HCT116 (cell line): ENCODE measurements at regions of chr3 and their contacts with region 1.

Region 1: DNA sequence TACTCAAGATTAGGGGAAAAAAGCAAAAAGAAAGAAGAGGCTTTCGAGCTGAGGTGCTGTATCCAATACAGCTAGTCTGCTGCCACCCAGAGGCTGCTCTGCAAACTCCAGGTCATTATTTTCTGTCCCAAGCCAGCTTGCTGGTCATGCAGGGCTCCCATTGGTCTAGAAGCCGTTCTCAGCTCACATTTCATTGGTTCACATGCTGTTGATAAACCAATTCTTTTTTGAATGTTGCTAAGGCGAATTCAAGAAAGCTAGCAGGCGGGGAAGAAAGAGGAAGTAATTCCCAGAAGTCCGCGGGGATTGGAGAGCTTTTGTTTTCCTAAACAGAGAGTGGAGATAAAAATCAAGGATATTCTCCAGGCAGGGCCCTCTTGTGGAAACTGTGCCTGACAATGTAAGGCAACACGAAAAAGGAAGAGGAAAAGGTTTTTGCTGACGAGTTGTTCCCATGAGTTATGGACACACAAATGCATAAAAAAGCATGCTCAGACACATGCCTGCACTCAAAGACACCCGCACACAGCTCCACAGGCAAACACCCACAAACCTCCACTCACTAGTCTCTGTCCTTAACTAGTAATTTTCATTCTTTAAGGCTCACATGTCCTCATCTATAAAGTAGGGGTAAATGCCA is 33.4 kb downstream of the FSTL1 start:
- DNase-seq: peak; percentile 96
- ATAC-seq: peak; percentile 91
- H3K4me3 ChIP-seq: peak overlapping the region; percentile 24 to 39
- H3K27ac ChIP-seq: peak overlapping the region; percentile 50
- H3K4me1 ChIP-seq: peaks cover 9 to 23% of the 10 kb centered on the region in 2 experiments
- H3K27me3 ChIP-seq: no peaks in the 10 kb centered on the region
- CTCF ChIP-seq: peak; percentile 78 to 95 (median 88)
- POLR2A ChIP-seq: no peak
- RAD21 ChIP-seq: peak; percentile 97

Region 2: DNA sequence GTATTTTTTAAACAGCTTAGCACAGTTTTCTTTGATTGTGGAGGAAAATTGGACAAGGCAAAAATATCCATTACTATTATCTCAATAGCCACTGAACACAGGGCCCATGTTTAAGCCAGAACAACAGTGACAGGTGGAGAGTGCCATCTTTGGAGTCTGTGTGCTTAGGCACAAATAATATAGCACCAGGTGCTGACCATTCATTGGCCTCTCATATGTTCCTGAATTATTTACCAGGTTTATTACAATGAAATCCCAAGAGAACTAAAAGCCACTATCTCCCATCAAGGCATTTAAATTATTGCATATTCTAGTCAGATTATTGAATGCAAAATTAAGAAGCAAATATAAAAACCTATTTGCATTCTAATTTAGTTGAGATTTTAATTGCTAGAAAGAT is 172.0 kb before region 1 on chr3:
- CTCF ChIA-PET with region 1: interaction called, 115 read pairs
- POLR2A ChIA-PET with region 1: interaction called, 3 read pairs
- RAD21 ChIA-PET with region 1: interaction called, 14 to 16 read pairs
- intact Hi-C with region 1: loop called (anchors 1 kb)
- DNase-seq: no peak
- ATAC-seq: no peak
- H3K4me3 ChIP-seq: no peak overlapping the region
- H3K27ac ChIP-seq: no peak overlapping the region
- H3K4me1 ChIP-seq: no peaks in the 10 kb centered on the region
- H3K27me3 ChIP-seq: no peaks in the 10 kb centered on the region
- CTCF ChIP-seq: no peak
- POLR2A ChIP-seq: no peak
- RAD21 ChIP-seq: no peak

Region 3: GRCh38 chr3:120435621-120436020 is 18.2 kb after region 1 on chr3:
- CTCF ChIA-PET with region 1: interaction called, 17 read pairs
- POLR2A ChIA-PET with region 1: no interaction called
- RAD21 ChIA-PET with region 1: no interaction called
- intact Hi-C with region 1: no loop called
- DNase-seq: peak; percentile 50
- ATAC-seq: peak; percentile 80
- H3K4me3 ChIP-seq: peak overlapping the region in 1 of 2 experiments; percentile 5; a peak in 1 of 4 replicates
- H3K27ac ChIP-seq: peak overlapping the region; percentile 30; the same call in 1 of the 2 replicates
- H3K4me1 ChIP-seq: peaks cover 2 to 26% of the 10 kb centered on the region in 2 experiments; a peak in 3 of 4 replicates
- H3K27me3 ChIP-seq: no peaks in the 10 kb centered on the region
- CTCF ChIP-seq: no peak
- POLR2A ChIP-seq: no peak
- RAD21 ChIP-seq: 0 out of 2 replicates have a peak, but pooled peaks have one; percentile 20

Region 4: GRCh38 chr3:120506828-120507774 is 89.7 kb after region 1 on chr3:
- CTCF ChIA-PET with region 1: interaction called, 3 read pairs
- POLR2A ChIA-PET with region 1: no interaction called
- RAD21 ChIA-PET with region 1: interaction called in 1 of 2 experiments, 3 read pairs
- intact Hi-C with region 1: loop called (anchors 1 kb)
- DNase-seq: peak; percentile 13
- ATAC-seq: peak; percentile 73
- H3K4me3 ChIP-seq: no peak overlapping the region
- H3K27ac ChIP-seq: no peak overlapping the region
- H3K4me1 ChIP-seq: no peaks in the 10 kb centered on the region; a peak in 1 of 4 replicates
- H3K27me3 ChIP-seq: no peaks in the 10 kb centered on the region
- CTCF ChIP-seq: peak; percentile 48 to 78 (median 76); a peak in 5 of 6 replicates
- POLR2A ChIP-seq: no peak
- RAD21 ChIP-seq: peak; percentile 57

Region 5: GRCh38 chr3:120567370-120568201 is 150.2 kb after region 1 on chr3:
- CTCF ChIA-PET with region 1: interaction called, 23 read pairs
- POLR2A ChIA-PET with region 1: interaction called, 3 read pairs
- RAD21 ChIA-PET with region 1: interaction called in 1 of 2 experiments, 3 read pairs
- intact Hi-C with region 1: no loop called
- DNase-seq: no peak
- ATAC-seq: peak; percentile 95
- H3K4me3 ChIP-seq: peak overlapping the region; percentile 8 to 15
- H3K27ac ChIP-seq: no peak overlapping the region
- H3K4me1 ChIP-seq: peaks cover 3 to 6% of the 10 kb centered on the region in 2 experiments; a peak in 3 of 4 replicates
- H3K27me3 ChIP-seq: no peaks in the 10 kb centered on the region
- CTCF ChIP-seq: peak; percentile 31 to 53 (median 43); a peak in 4 of 6 replicates
- POLR2A ChIP-seq: no peak
- RAD21 ChIP-seq: peak; percentile 46